CD4-positive, alpha-beta memory T cell (primary cell): ENCODE measurements at regions of chr11 and their contacts with region 1.

Region 1: DNA sequence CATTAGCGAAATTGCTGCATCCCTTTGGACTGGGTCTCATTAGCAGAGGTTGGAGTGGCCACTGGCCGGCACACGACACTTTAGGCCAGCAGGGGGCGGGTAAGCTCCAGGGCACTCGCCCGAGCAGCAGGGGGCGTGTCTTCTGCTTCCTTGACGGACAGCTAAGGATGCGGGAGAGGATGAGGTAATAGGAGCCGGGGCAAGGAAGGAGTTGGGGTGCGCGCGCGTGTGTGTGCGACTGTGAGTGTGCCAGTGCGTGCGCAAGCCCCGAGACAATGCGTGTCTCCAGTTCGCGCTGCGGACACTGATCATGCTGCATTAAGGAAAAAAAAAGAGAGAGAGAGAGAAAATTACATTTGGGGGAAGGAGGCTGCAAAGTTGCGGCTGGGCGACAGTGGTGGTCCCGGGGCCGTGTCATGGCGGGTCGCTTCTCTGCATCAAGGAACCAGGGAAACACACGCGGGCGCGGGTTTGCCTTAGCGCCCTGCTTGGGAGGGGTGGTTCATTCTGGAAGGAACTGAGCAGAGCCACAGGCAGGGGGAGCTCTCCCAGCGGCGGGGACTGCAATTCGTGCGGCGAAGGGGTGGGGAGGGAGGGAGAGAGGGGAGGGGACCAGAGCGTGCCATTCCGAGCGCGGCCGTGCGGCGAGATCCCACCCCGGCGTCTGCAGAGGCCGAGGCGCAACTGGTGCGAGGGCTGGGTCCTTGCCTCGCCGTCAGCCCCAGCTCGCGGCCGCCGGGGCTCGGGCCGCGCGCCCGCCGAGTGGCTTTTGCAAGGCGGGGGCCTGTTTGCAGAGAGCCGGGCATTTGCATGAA is at the start of gene DTX4:
- DNase-seq: peak; percentile 84 to 91 (median 84)
- H3K4me3 ChIP-seq: peak within 1 kb of the TSS; percentile 63 to 82
- H3K4me3 Mint-ChIP-seq: peak within 1 kb of the TSS; percentile 86 to 98 (median 90)
- H3K27ac ChIP-seq: no peak within 1 kb of the TSS
- H3K27ac Mint-ChIP-seq: peak within 1 kb of the TSS; percentile 13 to 86 (median 71)
- H3K4me1 ChIP-seq: peaks cover 11% of the 10 kb centered on the region
- H3K4me1 Mint-ChIP-seq: peaks cover 7 to 28% (median 9%) of the 10 kb centered on the region in 4 donors
- H3K27me3 ChIP-seq: no peaks in the 10 kb centered on the region
- H3K27me3 Mint-ChIP-seq: peaks cover 0 to 5% of the 10 kb centered on the region in 2 donors
- total RNA-seq, gene DTX4: 2.9 to 3.4 TPM

Region 2: DNA sequence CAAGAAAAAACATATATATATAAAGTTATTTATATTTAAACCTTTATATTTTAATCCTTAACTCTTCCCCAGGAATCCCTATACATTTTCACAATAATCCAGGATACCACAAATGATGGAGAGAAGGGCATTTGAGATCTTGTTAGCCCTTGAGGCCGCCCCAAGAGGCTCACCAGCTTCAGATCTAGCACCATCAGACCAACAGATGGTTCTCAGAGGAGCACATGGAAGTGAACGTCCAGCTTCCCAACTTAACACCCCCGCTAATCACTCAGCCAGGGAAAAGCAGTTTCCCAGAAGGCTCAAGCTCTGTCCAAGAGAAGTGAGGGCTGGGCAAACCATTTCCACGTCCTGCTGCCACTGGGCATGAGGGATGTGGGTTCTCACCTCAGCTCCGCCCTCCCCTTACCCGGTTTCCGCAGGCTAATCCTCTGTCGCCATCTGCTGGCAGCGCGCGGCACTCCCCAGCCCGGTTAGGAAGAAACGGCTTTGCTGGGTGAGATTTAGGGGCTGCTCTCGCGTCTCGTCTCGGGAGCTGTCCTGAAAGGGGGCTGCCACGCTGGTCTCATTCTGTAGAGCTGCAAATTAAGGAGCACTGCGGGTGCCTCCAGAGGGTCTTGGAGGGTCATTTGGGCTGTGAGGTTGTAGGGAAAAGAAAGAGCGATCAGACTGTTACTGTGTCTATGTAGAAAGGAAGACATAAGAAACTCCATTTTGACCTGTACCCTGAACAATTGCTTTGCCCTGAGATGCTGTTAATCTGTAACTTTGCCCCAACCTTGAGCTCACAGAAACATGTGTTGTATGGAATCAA is 35.9 kb before region 1 on chr11:
- CTCF ChIA-PET with region 1: interaction called, 13 read pairs
- POLR2A ChIA-PET with region 1: interaction called, 5 read pairs
- intact Hi-C with region 1: no loop called
- DNase-seq: peak; percentile 82 to 88 (median 83)
- H3K4me3 ChIP-seq: no peak overlapping the region
- H3K4me3 Mint-ChIP-seq: peak overlapping the region in 7 of 8 donors; percentile 18 to 87 (median 68)
- H3K27ac ChIP-seq: no peak overlapping the region
- H3K27ac Mint-ChIP-seq: peak overlapping the region; percentile 5 to 92 (median 88)
- H3K4me1 ChIP-seq: peaks cover 8% of the 10 kb centered on the region
- H3K4me1 Mint-ChIP-seq: peaks cover 7 to 12% (median 8%) of the 10 kb centered on the region in 4 donors
- H3K27me3 ChIP-seq: no peaks in the 10 kb centered on the region
- H3K27me3 Mint-ChIP-seq: no peaks in the 10 kb centered on the region

Region 3: GRCh38 chr11:59158206-59159068 is 13.3 kb before region 1 on chr11:
- CTCF ChIA-PET with region 1: interaction called, 17 read pairs
- POLR2A ChIA-PET with region 1: interaction called, 4 read pairs
- intact Hi-C with region 1: no loop called
- DNase-seq: peak; percentile 65 to 73 (median 68)
- H3K4me3 ChIP-seq: no peak overlapping the region
- H3K4me3 Mint-ChIP-seq: no peak overlapping the region
- H3K27ac ChIP-seq: no peak overlapping the region
- H3K27ac Mint-ChIP-seq: peak overlapping the region in 3 of 7 donors; percentile 36 to 90 (median 66)
- H3K4me1 ChIP-seq: peaks cover 3% of the 10 kb centered on the region
- H3K4me1 Mint-ChIP-seq: peaks cover 2 to 8% (median 5%) of the 10 kb centered on the region in 4 donors
- H3K27me3 ChIP-seq: no peaks in the 10 kb centered on the region
- H3K27me3 Mint-ChIP-seq: peaks cover 10 to 14% of the 10 kb centered on the region in 2 donors

Region 4: GRCh38 chr11:59191890-59192289 is 20.2 kb after region 1 on chr11:
- CTCF ChIA-PET with region 1: interaction called, 205 read pairs
- POLR2A ChIA-PET with region 1: interaction called, 11 read pairs
- intact Hi-C with region 1: no loop called
- DNase-seq: no peak
- H3K4me3 ChIP-seq: no peak overlapping the region
- H3K4me3 Mint-ChIP-seq: no peak overlapping the region
- H3K27ac ChIP-seq: no peak overlapping the region
- H3K27ac Mint-ChIP-seq: no peak overlapping the region
- H3K4me1 ChIP-seq: no peaks in the 10 kb centered on the region
- H3K4me1 Mint-ChIP-seq: peaks cover 0 to 4% (median 3%) of the 10 kb centered on the region in 4 donors
- H3K27me3 ChIP-seq: no peaks in the 10 kb centered on the region
- H3K27me3 Mint-ChIP-seq: peaks cover 0 to 2% of the 10 kb centered on the region in 2 donors

Region 5: DNA sequence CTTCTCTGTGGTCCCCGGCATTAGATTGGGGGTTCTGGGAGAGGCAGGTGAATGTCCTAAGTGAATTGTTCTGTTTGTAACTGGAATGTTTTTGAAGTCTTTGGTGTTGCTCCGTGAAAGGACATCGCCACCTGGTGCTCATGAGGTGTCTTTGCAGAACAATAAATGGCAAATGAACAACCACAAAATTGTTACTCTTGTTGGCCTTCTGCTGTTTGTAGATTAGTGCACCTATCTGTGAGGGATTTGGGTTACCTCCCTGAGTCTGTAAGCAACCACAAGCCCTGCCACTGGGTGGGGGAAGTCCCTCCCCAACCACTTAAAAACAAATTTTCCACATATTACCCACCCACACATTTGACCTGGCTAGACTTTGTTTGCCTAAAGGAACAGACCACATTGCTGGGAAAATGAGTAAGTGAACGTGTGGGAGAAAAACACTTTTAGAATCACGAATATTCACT is 36.3 kb after region 1 on chr11:
- CTCF ChIA-PET with region 1: interaction called, 33 read pairs
- POLR2A ChIA-PET with region 1: no interaction called
- intact Hi-C with region 1: loop called (anchors 1 kb)
- DNase-seq: peak; percentile 40 to 57 (median 53)
- H3K4me3 ChIP-seq: no peak overlapping the region
- H3K4me3 Mint-ChIP-seq: peak overlapping the region in 7 of 8 donors; percentile 40 to 82 (median 68)
- H3K27ac ChIP-seq: no peak overlapping the region
- H3K27ac Mint-ChIP-seq: peak overlapping the region in 6 of 7 donors; percentile 53 to 95 (median 86)
- H3K4me1 ChIP-seq: peaks cover 15% of the 10 kb centered on the region
- H3K4me1 Mint-ChIP-seq: peaks cover 11 to 33% (median 22%) of the 10 kb centered on the region in 4 donors
- H3K27me3 ChIP-seq: no peaks in the 10 kb centered on the region
- H3K27me3 Mint-ChIP-seq: no peaks in the 10 kb centered on the region

Region 6: GRCh38 chr11:59429924-59430516 is 258.3 kb after region 1 on chr11:
- CTCF ChIA-PET with region 1: interaction called, 69 read pairs
- POLR2A ChIA-PET with region 1: no interaction called
- intact Hi-C with region 1: no loop called
- DNase-seq: peak; percentile 38 to 64 (median 57)
- H3K4me3 ChIP-seq: no peak overlapping the region
- H3K4me3 Mint-ChIP-seq: no peak overlapping the region
- H3K27ac ChIP-seq: no peak overlapping the region
- H3K27ac Mint-ChIP-seq: no peak overlapping the region
- H3K4me1 ChIP-seq: no peaks in the 10 kb centered on the region
- H3K4me1 Mint-ChIP-seq: no peaks in the 10 kb centered on the region
- H3K27me3 ChIP-seq: no peaks in the 10 kb centered on the region
- H3K27me3 Mint-ChIP-seq: peaks cover 4 to 9% of the 10 kb centered on the region in 2 donors

Region 7: GRCh38 chr11:59448484-59448883 is 276.8 kb after region 1 on chr11:
- CTCF ChIA-PET with region 1: no interaction called
- POLR2A ChIA-PET with region 1: no interaction called
- intact Hi-C with region 1: no loop called
- DNase-seq: no peak
- H3K4me3 ChIP-seq: no peak overlapping the region
- H3K4me3 Mint-ChIP-seq: no peak overlapping the region
- H3K27ac ChIP-seq: no peak overlapping the region
- H3K27ac Mint-ChIP-seq: no peak overlapping the region
- H3K4me1 ChIP-seq: no peaks in the 10 kb centered on the region
- H3K4me1 Mint-ChIP-seq: no peaks in the 10 kb centered on the region
- H3K27me3 ChIP-seq: no peaks in the 10 kb centered on the region
- H3K27me3 Mint-ChIP-seq: peaks cover 6 to 13% of the 10 kb centered on the region in 2 donors

Region 8: GRCh38 chr11:59463190-59463641 is 291.5 kb after region 1 on chr11:
- CTCF ChIA-PET with region 1: no interaction called
- POLR2A ChIA-PET with region 1: no interaction called
- intact Hi-C with region 1: no loop called
- DNase-seq: no peak
- H3K4me3 ChIP-seq: no peak overlapping the region
- H3K4me3 Mint-ChIP-seq: no peak overlapping the region
- H3K27ac ChIP-seq: no peak overlapping the region
- H3K27ac Mint-ChIP-seq: no peak overlapping the region
- H3K4me1 ChIP-seq: no peaks in the 10 kb centered on the region
- H3K4me1 Mint-ChIP-seq: no peaks in the 10 kb centered on the region
- H3K27me3 ChIP-seq: no peaks in the 10 kb centered on the region
- H3K27me3 Mint-ChIP-seq: peaks cover 6 to 20% of the 10 kb centered on the region in 2 donors

Region 9: GRCh38 chr11:59680287-59681154 is 508.8 kb after region 1 on chr11:
- CTCF ChIA-PET with region 1: no interaction called
- POLR2A ChIA-PET with region 1: no interaction called
- intact Hi-C with region 1: loop called (anchors 1 kb)
- DNase-seq: peak; percentile 48 to 57 (median 52)
- H3K4me3 ChIP-seq: no peak overlapping the region
- H3K4me3 Mint-ChIP-seq: no peak overlapping the region
- H3K27ac ChIP-seq: no peak overlapping the region
- H3K27ac Mint-ChIP-seq: no peak overlapping the region
- H3K4me1 ChIP-seq: no peaks in the 10 kb centered on the region
- H3K4me1 Mint-ChIP-seq: no peaks in the 10 kb centered on the region
- H3K27me3 ChIP-seq: no peaks in the 10 kb centered on the region
- H3K27me3 Mint-ChIP-seq: peaks cover 8 to 12% of the 10 kb centered on the region in 2 donors